Lower lobe of right lung (tissue), 2 donors: ENCODE measurements at regions of chr9 and their contacts with region 1.

Region 1: DNA sequence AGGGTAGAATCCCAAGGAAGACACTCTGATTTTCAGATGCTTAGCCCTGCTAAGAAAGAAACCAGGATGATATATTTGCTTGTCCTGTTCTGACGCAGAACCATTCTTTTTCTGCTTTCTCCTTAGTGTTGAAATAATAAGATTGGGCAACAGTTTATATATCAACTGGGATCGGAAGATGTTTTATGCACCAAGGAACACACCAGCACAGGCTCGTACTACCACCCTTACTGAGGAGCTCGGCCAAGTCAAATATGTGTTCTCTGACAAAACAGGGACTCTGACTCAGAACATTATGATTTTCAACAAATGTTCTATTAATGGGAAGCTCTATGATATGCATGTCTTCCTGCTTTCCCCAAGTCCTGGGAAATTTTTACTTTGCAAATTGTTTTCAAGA is 19.0 kb upstream of the RUSC2 start:
- DNase-seq: no peak
- ATAC-seq: peak; percentile 70 to 86
- H3K4me3 ChIP-seq: no peak overlapping the region
- H3K27ac ChIP-seq: peak overlapping the region; percentile 18
- H3K4me1 ChIP-seq: no peaks in the 10 kb centered on the region
- H3K27me3 ChIP-seq: no peaks in the 10 kb centered on the region
- CTCF ChIP-seq: no peak

Region 2: DNA sequence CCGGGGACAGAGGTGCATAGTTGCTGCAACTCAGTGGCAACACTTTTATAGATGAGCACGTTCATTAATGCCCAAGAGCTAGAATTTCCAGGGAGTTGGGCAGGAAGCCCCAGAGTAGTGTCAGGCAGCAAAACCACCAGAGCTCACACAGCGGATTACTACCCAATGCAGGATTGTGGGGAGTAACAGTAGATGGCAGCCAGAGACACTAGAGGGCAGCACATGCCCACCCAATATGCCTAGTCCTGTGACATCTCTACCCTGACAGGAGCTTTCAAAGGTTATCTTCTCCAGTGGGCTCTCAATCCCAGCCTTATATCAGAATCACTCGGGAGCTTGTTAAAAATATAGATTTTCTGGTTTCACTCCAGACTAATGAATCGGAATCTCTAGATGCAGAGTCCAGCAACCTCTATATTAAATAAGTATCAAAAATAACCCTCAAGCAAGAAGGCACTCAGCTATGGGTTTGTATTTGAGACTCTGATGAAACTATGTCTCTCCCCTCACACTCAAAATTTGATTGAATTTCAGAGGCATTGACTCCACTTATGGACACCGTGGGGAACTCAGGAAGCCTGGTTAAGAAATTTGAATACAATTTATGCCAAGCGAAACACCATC is 571.2 kb before region 1 on chr9:
- intact Hi-C with region 1: loop called (anchors 10 kb)
- DNase-seq: peak; percentile 68
- ATAC-seq: peak; percentile 97 to 98
- H3K4me3 ChIP-seq: no peak overlapping the region
- H3K27ac ChIP-seq: no peak overlapping the region
- H3K4me1 ChIP-seq: no peaks in the 10 kb centered on the region
- H3K27me3 ChIP-seq: peaks cover 18% of the 10 kb centered on the region
- CTCF ChIP-seq: peak; percentile 87

Region 3: DNA sequence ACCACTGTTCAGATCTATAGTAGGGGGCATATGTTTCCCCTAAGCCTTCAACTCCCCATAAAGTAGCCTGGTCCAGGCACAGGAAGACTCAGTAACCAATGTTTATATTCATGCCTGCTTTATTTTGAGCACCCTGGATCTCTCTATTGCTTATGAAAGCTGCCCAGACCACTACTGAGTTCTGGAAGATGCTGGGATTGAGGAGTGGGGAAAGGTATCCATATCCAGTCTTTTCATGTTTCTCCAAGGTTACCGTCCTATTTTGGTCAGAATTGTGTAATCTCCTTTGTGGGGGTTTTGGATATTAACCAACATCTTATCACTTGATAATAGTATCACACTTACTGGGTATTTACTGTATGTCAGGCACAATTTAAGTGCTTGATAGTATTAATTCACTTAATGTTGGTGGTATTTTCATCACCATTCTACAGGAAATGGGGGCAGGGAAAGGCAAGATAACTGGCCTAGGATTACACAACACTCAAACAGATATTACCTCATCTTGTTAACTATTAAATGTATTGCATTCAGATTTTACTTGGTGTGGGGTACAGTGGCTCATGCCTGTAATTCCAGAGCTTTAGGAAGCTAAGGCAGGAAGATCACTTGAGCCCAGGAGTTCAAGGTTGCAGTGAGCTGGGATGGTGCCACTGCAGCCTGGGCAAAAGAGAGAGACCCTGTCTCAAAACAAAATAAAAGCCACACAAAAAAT is 55.4 kb after region 1 on chr9:
- intact Hi-C with region 1: no loop called
- DNase-seq: no peak
- ATAC-seq: peak; percentile 49 to 67
- H3K4me3 ChIP-seq: no peak overlapping the region
- H3K27ac ChIP-seq: no peak overlapping the region
- H3K4me1 ChIP-seq: peaks cover 46% of the 10 kb centered on the region
- H3K27me3 ChIP-seq: no peaks in the 10 kb centered on the region
- CTCF ChIP-seq: no peak